OCI-LY7 (cell line): ENCODE measurements at regions of chr11 and their contacts with region 1.

Region 1: GRCh38 chr11:76152086-76152681 is 54.1 kb downstream of the WNT11 start:
- DNase-seq: peak; percentile 76
- H3K4me3 ChIP-seq: no peak overlapping the region
- H3K27ac ChIP-seq: no peak overlapping the region
- H3K4me1 ChIP-seq: peaks cover 21% of the 10 kb centered on the region
- CTCF ChIP-seq: peak; percentile 81

Region 2: GRCh38 chr11:75721855-75722668 is 430.1 kb before region 1 on chr11:
- CTCF ChIA-PET with region 1: no interaction called
- POLR2A ChIA-PET with region 1: no interaction called
- intact Hi-C with region 1: loop called (anchors 1 kb)
- DNase-seq: no peak
- H3K4me3 ChIP-seq: no peak overlapping the region
- H3K27ac ChIP-seq: no peak overlapping the region
- H3K4me1 ChIP-seq: no peaks in the 10 kb centered on the region
- CTCF ChIP-seq: no peak

Region 3: DNA sequence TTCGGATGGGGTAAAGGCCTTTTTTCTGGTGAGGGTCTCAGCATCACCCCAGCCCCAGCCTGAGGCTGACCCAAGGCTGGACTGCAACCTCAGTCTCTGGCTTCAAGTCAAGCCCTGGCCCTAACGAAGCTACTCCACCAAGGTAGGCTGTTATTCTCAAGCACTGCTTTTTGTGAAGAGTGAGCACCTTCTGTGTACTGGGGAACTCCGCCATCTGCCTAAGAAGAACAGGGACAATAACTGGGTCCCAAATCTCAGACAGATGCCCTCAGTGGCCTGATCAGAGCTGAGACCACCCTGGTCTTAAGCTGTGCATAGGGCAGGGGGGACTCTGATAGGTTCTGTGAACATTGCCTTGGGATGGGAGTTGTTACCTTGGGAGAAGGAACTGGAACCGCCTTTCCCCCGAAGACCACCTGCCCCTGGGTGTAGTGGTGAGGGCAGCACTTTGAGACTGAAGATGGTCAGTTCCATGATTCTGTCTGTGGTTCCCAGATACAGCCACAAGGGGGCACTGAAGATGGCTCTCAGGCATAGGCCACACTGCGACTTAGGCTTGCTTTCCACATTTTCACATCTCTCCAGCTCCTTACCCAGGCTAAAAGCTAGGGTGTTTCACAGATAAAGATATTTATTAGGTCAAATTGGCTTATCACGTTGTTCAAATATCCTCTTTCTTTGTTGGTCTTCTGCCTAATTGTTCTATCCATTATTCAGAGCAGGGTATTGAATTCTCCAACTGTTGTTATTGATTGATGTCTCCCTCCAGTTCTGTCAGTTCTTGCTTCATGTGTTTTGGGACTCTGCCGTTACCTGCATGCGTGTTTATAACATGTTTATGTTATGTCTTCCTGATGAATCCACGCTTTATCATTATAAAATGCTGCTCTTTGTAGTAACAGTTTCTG is 349.0 kb before region 1 on chr11:
- CTCF ChIA-PET with region 1: no interaction called
- POLR2A ChIA-PET with region 1: no interaction called
- intact Hi-C with region 1: loop called (anchors 5 kb)
- DNase-seq: peak; percentile 80
- H3K4me3 ChIP-seq: no peak overlapping the region
- H3K27ac ChIP-seq: no peak overlapping the region
- H3K4me1 ChIP-seq: peaks cover 14% of the 10 kb centered on the region
- CTCF ChIP-seq: peak; percentile 98

Region 4: GRCh38 chr11:75896843-75897419 is 255.3 kb before region 1 on chr11:
- CTCF ChIA-PET with region 1: no interaction called
- POLR2A ChIA-PET with region 1: no interaction called
- intact Hi-C with region 1: loop called (anchors 1 kb)
- DNase-seq: peak; percentile 57
- H3K4me3 ChIP-seq: no peak overlapping the region
- H3K27ac ChIP-seq: no peak overlapping the region
- H3K4me1 ChIP-seq: peaks cover 9% of the 10 kb centered on the region
- CTCF ChIP-seq: peak; percentile 92